Mammary epithelial cell (primary cell): ENCODE measurements at regions of chr2 and their contacts with region 1.

Region 1: DNA sequence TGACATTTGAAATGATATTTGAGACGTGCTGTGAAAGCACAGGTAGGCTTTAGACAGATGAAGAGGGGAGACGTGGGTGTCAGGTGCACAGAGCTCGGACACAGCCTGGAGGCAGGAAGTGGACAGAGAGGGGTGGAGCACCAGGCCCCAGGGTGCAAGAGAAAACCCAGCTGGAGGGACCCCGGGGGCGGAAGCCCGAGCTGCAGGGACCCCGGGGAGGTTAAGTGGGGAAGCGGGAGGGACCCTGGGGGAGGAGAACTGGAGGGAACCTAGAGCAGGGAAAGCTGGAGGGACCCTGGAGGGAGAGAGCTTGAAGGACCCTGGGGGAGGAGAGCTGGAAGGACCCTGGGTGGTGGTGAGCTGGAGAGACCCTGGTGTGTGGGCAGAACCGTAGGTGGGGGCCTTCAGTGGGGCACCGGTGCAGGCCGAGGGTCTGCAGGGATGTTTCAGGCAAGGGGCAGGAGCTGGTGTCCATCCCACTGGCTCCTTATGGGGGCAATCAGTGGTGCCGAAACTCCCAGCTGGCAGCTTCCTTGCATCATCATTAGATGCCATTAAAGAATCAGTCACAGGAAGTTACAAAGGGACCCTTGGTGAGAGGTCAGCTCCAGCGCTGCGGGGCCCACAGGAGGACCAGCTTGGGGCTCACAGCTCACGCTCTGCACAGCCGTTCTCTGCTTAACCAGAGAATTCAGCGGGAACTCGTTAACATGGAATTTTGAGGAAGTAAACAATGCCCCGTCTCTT is 246.6 kb downstream of the EIPR1 start:
- DNase-seq: no peak
- H3K4me3 ChIP-seq: no peak overlapping the region
- H3K27ac ChIP-seq: no peak overlapping the region
- H3K4me1 ChIP-seq: no peaks in the 10 kb centered on the region
- H3K27me3 ChIP-seq: no peaks in the 10 kb centered on the region
- CTCF ChIP-seq: no peak

Region 2: GRCh38 chr2:3145471-3146028 is 14.5 kb after region 1 on chr2:
- CTCF ChIA-PET with region 1: no interaction called
- dilution Hi-C with region 1: no loop called
- in situ Hi-C with region 1: no loop called
- intact Hi-C with region 1: loop called (anchors 1 kb)
- DNase-seq: no peak
- H3K4me3 ChIP-seq: no peak overlapping the region
- H3K27ac ChIP-seq: no peak overlapping the region
- H3K4me1 ChIP-seq: no peaks in the 10 kb centered on the region
- H3K27me3 ChIP-seq: no peaks in the 10 kb centered on the region
- CTCF ChIP-seq: no peak

Region 3: GRCh38 chr2:3214827-3215404 is 83.9 kb after region 1 on chr2:
- CTCF ChIA-PET with region 1: no interaction called
- dilution Hi-C with region 1: loop called (anchors 5 kb)
- in situ Hi-C with region 1: no loop called
- intact Hi-C with region 1: no loop called
- DNase-seq: no peak
- H3K4me3 ChIP-seq: no peak overlapping the region
- H3K27ac ChIP-seq: no peak overlapping the region
- H3K4me1 ChIP-seq: no peaks in the 10 kb centered on the region
- H3K27me3 ChIP-seq: no peaks in the 10 kb centered on the region
- CTCF ChIP-seq: no peak